ENCODE measurements at regions of chr11 and their contacts with region 1.

Region 1: GRCh38 chr11:6353367-6353987 is 33.2 kb upstream of the CAVIN3 start:
- DNase-seq: peak; percentile 72
- H3K4me3 Mint-ChIP-seq: no peak overlapping the region
- H3K27ac Mint-ChIP-seq: no peak overlapping the region
- H3K4me1 Mint-ChIP-seq: peaks cover 44% of the 10 kb centered on the region
- H3K27me3 Mint-ChIP-seq: no peaks in the 10 kb centered on the region

Region 2: GRCh38 chr11:5476184-5476819 is 877.2 kb before region 1 on chr11:
- CTCF ChIA-PET with region 1: interaction called, 6 read pairs
- POLR2A ChIA-PET with region 1: no interaction called
- intact Hi-C with region 1: loop called (anchors 2 kb)
- DNase-seq: peak; percentile 42
- H3K4me3 Mint-ChIP-seq: no peak overlapping the region
- H3K27ac Mint-ChIP-seq: no peak overlapping the region
- H3K4me1 Mint-ChIP-seq: no peaks in the 10 kb centered on the region
- H3K27me3 Mint-ChIP-seq: peaks cover 21% of the 10 kb centered on the region

Region 3: GRCh38 chr11:5818245-5818886 is 535.1 kb before region 1 on chr11:
- CTCF ChIA-PET with region 1: no interaction called
- POLR2A ChIA-PET with region 1: no interaction called
- intact Hi-C with region 1: loop called (anchors 10 kb)
- DNase-seq: no peak
- H3K4me3 Mint-ChIP-seq: peak overlapping the region; percentile 39
- H3K27ac Mint-ChIP-seq: no peak overlapping the region
- H3K4me1 Mint-ChIP-seq: peaks cover 8% of the 10 kb centered on the region
- H3K27me3 Mint-ChIP-seq: no peaks in the 10 kb centered on the region

Region 4: DNA sequence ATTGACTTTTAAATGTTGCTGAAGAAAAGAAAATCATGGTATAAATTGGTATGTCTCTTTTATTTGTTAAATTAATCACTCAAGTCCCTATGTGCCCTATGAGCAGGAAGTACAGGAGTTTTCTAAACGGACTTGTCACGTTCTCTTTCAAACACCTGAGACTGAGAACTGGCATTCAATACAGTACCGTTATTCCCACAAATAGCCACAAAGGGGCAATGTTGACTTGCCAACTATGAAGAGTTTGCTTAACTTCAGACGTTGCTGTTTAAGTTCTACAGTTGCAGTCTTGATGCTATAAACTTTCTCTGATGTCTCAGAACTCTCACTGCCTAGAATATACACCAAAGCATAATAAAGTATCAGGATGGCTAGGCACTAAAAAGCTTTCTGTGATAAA is 330.5 kb before region 1 on chr11:
- CTCF ChIA-PET with region 1: interaction called, 10 read pairs
- POLR2A ChIA-PET with region 1: no interaction called
- intact Hi-C with region 1: loop called (anchors 2 kb)
- DNase-seq: no peak
- H3K4me3 Mint-ChIP-seq: no peak overlapping the region
- H3K27ac Mint-ChIP-seq: no peak overlapping the region
- H3K4me1 Mint-ChIP-seq: no peaks in the 10 kb centered on the region
- H3K27me3 Mint-ChIP-seq: peaks cover 26% of the 10 kb centered on the region

Region 5: GRCh38 chr11:6251120-6251733 is 102.2 kb before region 1 on chr11:
- CTCF ChIA-PET with region 1: interaction called, 183 read pairs
- POLR2A ChIA-PET with region 1: no interaction called
- intact Hi-C with region 1: loop called (anchors 1 kb)
- DNase-seq: peak; percentile 74
- H3K4me3 Mint-ChIP-seq: no peak overlapping the region
- H3K27ac Mint-ChIP-seq: no peak overlapping the region
- H3K4me1 Mint-ChIP-seq: no peaks in the 10 kb centered on the region
- H3K27me3 Mint-ChIP-seq: no peaks in the 10 kb centered on the region

Region 6: DNA sequence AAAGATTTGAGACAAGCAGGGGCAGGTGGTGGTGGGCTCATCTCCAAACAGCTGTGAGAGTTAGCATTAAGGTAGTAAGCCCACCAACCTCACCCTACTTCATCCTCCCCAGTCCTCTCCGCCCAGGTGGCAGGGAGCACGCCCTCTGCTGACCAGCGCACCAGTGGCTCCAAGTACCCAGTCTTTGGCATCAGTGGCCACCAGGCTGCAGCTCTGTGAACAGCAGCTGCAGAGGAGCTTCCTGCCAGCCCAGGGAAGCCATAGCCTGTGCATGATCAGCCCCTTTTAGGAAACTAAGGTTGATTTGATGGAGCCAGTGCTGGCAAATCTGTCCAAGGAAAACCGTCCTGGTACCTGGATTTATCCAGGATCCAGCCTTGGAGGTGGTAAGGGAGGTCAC is 54.9 kb before region 1 on chr11:
- CTCF ChIA-PET with region 1: interaction called, 32 read pairs
- POLR2A ChIA-PET with region 1: no interaction called
- intact Hi-C with region 1: loop called (anchors 1 kb)
- DNase-seq: peak; percentile 55
- H3K4me3 Mint-ChIP-seq: no peak overlapping the region
- H3K27ac Mint-ChIP-seq: no peak overlapping the region
- H3K4me1 Mint-ChIP-seq: no peaks in the 10 kb centered on the region
- H3K27me3 Mint-ChIP-seq: peaks cover 5% of the 10 kb centered on the region

Region 7: GRCh38 chr11:6321961-6322362 is 31.5 kb before region 1 on chr11:
- CTCF ChIA-PET with region 1: interaction called, 179 read pairs
- POLR2A ChIA-PET with region 1: interaction called, 29 read pairs
- intact Hi-C with region 1: loop called (anchors 1 kb)
- DNase-seq: peak; percentile 41
- H3K4me3 Mint-ChIP-seq: peak overlapping the region; percentile 39
- H3K27ac Mint-ChIP-seq: peak overlapping the region; percentile 97
- H3K4me1 Mint-ChIP-seq: peaks cover 40% of the 10 kb centered on the region
- H3K27me3 Mint-ChIP-seq: peaks cover 32% of the 10 kb centered on the region

Region 8: DNA sequence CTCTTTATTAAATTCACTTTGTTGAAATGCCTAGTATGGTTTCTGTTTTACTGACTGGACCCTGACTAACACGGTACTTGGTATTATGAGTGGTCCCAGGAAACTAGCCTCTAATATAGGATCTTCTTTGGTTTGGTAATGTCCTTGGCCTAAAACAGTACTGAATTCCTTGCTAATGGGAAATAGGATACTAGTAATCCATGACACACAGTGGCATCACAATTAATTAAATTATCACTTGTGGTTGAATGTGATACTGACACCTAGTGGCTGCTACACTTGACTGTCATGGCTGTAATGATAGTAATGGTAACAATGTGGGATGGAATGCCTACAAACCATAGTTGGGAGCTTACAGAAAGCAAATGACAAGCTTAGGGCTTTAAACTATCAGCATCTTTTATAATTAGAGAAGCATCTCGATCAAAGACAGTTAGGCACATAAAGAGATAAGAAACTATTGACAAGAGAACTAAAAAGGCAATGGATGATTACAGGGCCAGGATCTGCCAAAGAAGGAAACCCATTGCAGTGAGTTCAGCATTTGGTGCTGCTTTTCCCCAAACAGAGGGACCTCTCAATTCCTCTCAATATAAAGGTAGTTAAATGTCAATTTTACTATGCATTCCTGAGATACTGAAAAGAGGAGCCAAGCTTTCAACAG is 152.2 kb after region 1 on chr11:
- CTCF ChIA-PET with region 1: no interaction called
- POLR2A ChIA-PET with region 1: no interaction called
- intact Hi-C with region 1: no loop called
- DNase-seq: no peak
- H3K4me3 Mint-ChIP-seq: no peak overlapping the region
- H3K27ac Mint-ChIP-seq: no peak overlapping the region
- H3K4me1 Mint-ChIP-seq: peaks cover 1% of the 10 kb centered on the region
- H3K27me3 Mint-ChIP-seq: no peaks in the 10 kb centered on the region